Activated naive CD4-positive, alpha-beta T cell treated with anti-CD3 and anti-CD28 coated beads for 36 hours (primary cell): ENCODE measurements at regions of chr4 and their contacts with region 1.

Region 1: DNA sequence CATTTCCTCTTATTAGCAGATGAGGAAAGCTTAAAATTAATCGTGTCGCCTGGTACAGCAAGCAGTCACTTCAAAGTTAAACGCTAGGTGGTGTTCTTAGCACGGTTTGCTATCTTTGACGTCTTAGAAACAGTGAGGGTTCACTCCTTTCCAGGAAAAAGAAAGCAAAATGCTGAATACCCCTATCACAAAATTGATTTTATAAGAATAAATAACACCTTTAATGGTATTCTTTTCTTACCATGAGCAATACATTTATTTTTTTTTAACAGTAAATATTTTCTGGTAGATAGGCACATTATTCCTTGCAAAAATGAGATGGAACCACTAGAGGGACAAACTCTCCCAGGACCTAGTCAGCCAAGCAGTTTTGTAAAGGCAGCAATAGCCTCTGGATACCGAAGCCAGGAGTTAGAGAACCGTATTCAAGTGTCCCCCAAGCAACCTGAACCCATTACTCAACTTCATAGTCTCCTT is 153.9 kb downstream of the KDR start:
- DNase-seq: peak; percentile 27
- H3K4me3 Mint-ChIP-seq: no peak overlapping the region
- H3K27ac Mint-ChIP-seq: no peak overlapping the region
- H3K4me1 Mint-ChIP-seq: peaks cover 2% of the 10 kb centered on the region
- H3K27me3 Mint-ChIP-seq: peaks cover 5% of the 10 kb centered on the region

Region 2: GRCh38 chr4:54961357-54961975 is 10.0 kb before region 1 on chr4:
- CTCF ChIA-PET with region 1: interaction called, 10 read pairs
- intact Hi-C with region 1: no loop called
- DNase-seq: peak; percentile 15
- H3K4me3 Mint-ChIP-seq: no peak overlapping the region
- H3K27ac Mint-ChIP-seq: no peak overlapping the region
- H3K4me1 Mint-ChIP-seq: peaks cover 26% of the 10 kb centered on the region
- H3K27me3 Mint-ChIP-seq: no peaks in the 10 kb centered on the region

Region 3: GRCh38 chr4:55336136-55337034 is 364.9 kb after region 1 on chr4:
- CTCF ChIA-PET with region 1: no interaction called
- intact Hi-C with region 1: loop called (anchors 5 kb)
- DNase-seq: peak; percentile 55
- H3K4me3 Mint-ChIP-seq: no peak overlapping the region
- H3K27ac Mint-ChIP-seq: peak overlapping the region; percentile 66
- H3K4me1 Mint-ChIP-seq: peaks cover 19% of the 10 kb centered on the region
- H3K27me3 Mint-ChIP-seq: no peaks in the 10 kb centered on the region

Region 4: GRCh38 chr4:55554453-55555030 is 583.0 kb after region 1 on chr4:
- CTCF ChIA-PET with region 1: no interaction called
- intact Hi-C with region 1: loop called (anchors 1 kb)
- DNase-seq: no peak
- H3K4me3 Mint-ChIP-seq: no peak overlapping the region
- H3K27ac Mint-ChIP-seq: no peak overlapping the region
- H3K4me1 Mint-ChIP-seq: peaks cover 12% of the 10 kb centered on the region
- H3K27me3 Mint-ChIP-seq: peaks cover 12% of the 10 kb centered on the region

Region 5: GRCh38 chr4:56301181-56302076 is 1329.9 kb after region 1 on chr4:
- CTCF ChIA-PET with region 1: no interaction called
- intact Hi-C with region 1: loop called (anchors 2 kb)
- DNase-seq: peak; percentile 84
- H3K4me3 Mint-ChIP-seq: peak overlapping the region; percentile 45
- H3K27ac Mint-ChIP-seq: no peak overlapping the region
- H3K4me1 Mint-ChIP-seq: peaks cover 12% of the 10 kb centered on the region
- H3K27me3 Mint-ChIP-seq: no peaks in the 10 kb centered on the region